KBM-7 (cell line): ENCODE measurements at regions of chr2 and their contacts with region 1.

Region 1: GRCh38 chr2:101151141-101151858 is at the start of gene TBC1D8:
- DNase-seq: peak; percentile 53

Region 2: GRCh38 chr2:100126201-100126600 is 1025.1 kb before region 1 on chr2:
- in situ Hi-C with region 1: no loop called
- DNase-seq: no peak

Region 3: GRCh38 chr2:100610381-100610831 is 540.9 kb before region 1 on chr2:
- in situ Hi-C with region 1: loop called (anchors 25 kb)
- DNase-seq: peak; percentile 70

Region 4: DNA sequence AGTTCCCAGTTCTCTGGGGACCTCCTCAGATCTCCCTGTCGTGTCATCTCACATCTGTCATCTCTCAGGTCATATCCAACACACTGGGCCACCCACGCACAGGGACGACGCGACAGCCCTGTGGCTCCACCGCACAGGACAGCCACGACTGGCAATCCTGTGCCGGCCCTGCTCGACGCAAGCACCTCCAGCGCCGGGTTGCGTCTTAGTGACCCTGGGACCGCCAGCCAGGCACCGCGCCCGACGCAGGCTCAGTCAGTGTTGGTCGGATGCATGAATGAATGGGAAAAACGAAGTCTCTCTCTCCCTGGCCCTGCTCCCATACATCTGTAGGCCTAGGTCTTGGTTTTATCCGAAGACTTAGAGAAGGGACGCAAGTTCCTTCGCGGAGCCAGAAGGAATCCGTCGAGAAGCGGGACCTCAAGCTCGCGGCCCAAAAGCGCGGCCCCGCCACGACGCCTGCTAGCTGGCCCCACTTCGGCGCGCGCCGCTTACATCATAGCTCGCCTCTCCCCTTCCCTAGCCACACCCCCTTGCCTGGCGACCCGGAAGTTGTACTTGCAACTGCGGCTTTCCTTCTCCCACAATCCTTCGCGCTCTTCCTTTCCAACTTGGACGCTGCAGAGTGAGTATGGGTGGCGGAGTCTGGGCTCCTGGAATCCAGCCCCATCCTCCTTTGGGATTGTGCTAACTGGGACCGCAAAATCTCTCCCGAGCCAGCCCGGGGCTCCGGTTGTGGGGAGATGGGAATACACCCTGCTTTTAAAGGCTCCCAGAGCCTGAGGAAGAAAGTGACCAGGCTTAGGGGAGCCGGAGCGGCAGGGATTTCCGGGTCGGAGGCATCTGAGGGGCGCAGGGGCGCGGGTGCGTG is 149.4 kb before region 1 on chr2 and contains the start of gene RPL31:
- in situ Hi-C with region 1: no loop called
- DNase-seq: peak; percentile 96

Region 5: GRCh38 chr2:101026253-101026701 is 125.0 kb before region 1 on chr2:
- in situ Hi-C with region 1: loop called (anchors 10 kb)
- DNase-seq: no peak

Region 6: DNA sequence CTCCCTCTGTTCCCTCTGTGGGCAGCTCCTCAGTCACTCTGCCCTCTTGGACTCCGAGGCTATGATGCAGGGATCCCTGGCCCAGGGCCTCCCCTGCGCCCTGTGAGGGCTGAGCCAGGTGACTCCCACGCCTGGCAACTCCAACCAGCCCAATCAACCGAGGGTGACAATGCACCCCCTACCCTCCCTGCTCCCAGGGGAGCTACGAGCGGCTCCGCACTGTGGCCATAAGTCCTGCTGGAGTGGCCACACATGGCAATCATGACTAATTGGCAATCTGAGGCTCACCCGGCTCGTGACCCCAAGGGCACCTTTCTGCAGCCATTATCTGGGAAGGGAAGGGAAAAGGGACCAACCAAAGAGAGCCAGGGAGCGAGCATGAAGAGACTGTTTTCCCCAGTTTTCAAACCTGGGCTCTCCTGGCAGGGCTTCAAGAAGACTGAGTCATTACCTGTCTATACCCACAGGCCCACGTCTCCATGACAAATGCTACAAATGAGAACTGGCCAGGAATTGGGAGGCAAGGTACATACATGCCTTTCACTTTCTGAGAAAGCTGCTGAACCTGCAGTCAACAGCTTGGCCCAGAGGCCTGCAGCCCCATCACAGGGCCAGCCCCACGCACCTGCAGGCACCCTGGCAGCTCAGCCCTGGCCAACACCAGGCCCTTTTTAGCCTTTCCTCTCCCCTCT is 104.1 kb before region 1 on chr2:
- in situ Hi-C with region 1: no loop called
- DNase-seq: no peak

Region 7: DNA sequence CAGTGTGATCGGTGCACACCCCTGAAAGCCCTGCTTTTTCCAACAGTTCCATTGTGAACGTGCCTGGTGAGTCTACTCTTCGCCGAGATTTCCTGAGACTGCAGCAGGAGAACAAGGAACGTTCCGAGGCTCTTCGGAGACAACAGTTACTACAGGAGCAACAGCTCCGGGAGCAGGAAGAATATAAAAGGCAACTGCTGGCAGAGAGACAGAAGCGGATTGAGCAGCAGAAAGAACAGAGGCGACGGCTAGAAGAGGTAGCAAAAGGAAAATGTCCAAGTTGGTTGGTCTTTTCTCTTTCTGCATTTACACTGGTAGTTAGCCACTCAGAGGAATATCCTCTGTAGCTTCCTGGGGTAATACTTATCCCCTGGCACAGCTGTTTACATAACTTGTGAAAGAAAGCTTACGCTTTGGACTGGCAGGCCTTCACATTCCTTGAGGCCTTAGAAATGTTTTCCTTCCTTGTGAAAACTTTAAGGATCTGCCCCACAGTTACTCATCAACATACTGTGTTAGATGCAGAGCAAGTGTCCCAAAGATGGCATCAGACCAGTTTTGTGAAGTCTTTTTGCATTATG is 692.8 kb after region 1 on chr2:
- in situ Hi-C with region 1: no loop called
- DNase-seq: no peak